Ovary (tissue), 10 donors: ENCODE measurements at regions of chr7 and their contacts with region 1.

Region 1: DNA sequence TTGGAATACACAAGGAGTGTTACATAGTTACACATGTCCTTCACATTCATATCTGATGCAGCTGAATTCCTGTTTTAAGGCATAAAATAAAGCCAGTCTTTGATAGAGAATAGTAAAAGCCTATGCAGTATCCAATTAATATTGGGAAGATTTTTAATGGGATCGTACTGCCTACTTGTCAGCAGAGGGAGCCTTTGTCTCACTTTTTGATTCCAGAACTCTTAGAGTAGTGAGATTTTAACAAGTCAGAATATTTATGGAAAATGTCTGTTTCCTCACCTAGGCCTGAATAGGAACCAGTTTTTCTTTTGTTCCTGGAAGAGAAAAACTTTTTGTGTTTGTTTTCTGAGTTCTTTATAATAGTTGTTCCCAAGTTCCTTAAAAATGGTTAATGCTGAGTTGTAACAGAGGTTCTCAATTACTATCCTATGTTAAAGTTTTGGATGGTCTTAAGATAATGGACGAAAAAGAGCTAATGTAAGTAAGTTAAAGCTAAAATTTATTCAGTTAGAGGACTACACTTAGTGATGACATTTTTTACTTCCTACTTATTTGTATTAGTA is 114.0 kb downstream of the BBS9 start:
- DNase-seq: no peak
- H3K4me3 ChIP-seq: no peak overlapping the region
- H3K27ac ChIP-seq: no peak overlapping the region
- H3K4me1 ChIP-seq: no peaks in the 10 kb centered on the region
- H3K27me3 ChIP-seq: no peaks in the 10 kb centered on the region
- CTCF ChIP-seq: peak; percentile 39 to 50 (median 50)
- EP300 ChIP-seq: no peak
- POLR2A ChIP-seq: no peak

Region 2: DNA sequence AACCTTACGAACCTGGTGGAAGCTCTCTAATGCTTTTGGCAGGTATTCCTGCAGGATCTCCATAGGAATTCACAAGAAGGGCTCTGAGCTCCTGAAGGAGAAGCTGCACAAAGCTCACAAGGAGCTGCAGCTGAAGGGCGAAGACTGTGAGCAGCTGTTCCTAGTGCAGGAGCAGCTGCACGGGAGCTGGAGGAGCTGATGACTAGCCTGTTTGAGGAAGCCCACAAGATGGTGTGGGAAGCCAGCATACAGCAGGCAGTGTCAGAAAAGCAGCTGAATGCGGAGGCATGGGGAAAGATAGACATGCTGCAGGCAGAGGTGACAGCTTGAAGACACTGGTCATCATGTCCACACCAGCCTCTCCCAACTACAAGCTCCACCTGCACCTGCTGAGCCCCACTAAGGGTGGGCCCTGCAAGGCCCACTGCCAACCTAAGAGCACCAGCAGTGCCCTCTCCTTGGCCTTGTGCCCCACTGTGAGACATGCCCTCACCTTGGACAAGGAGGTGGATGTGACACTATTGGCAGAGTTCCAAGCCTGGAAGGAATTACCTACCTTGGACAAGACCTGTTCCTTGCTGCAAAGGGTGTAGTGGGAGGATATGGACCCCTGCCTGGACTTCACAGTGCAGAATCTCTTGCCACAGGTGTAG is 136.6 kb after region 1 on chr7:
- intact Hi-C with region 1: no loop called
- DNase-seq: no peak
- H3K4me3 ChIP-seq: no peak overlapping the region
- H3K27ac ChIP-seq: no peak overlapping the region
- H3K4me1 ChIP-seq: no peaks in the 10 kb centered on the region
- H3K27me3 ChIP-seq: no peaks in the 10 kb centered on the region
- CTCF ChIP-seq: no peak
- EP300 ChIP-seq: no peak
- POLR2A ChIP-seq: no peak

Region 3: GRCh38 chr7:33932832-33933468 is 689.5 kb after region 1 on chr7:
- intact Hi-C with region 1: loop called in 1 of 4 experiments (anchors 10 kb)
- DNase-seq: peak; percentile 87 to 93 (median 89)
- H3K4me3 ChIP-seq: peak overlapping the region; percentile 22
- H3K27ac ChIP-seq: peak overlapping the region in 1 of 2 donors; percentile 25
- H3K4me1 ChIP-seq: peaks cover 1% of the 10 kb centered on the region
- H3K27me3 ChIP-seq: no peaks in the 10 kb centered on the region
- CTCF ChIP-seq: peak; percentile 74 to 96 (median 85)
- EP300 ChIP-seq: no peak
- POLR2A ChIP-seq: no peak